ENCODE measurements at regions of chr3 and their contacts with region 1.

Region 1: GRCh38 chr3:138915503-138916498 is 31.1 kb downstream of the FOXL2 start:
- DNase-seq: peak; percentile 91 to 99 (median 96)
- ATAC-seq: peak; percentile 91 to 97 (median 92)
- H3K4me3 ChIP-seq: peak overlapping the region; percentile 39 to 68 (median 58)
- H3K27ac ChIP-seq: peak overlapping the region; percentile 93 to 99 (median 96)
- H3K4me1 ChIP-seq: peaks cover 5 to 13% (median 5%) of the 10 kb centered on the region in 3 donors
- H3K27me3 ChIP-seq: no peaks in the 10 kb centered on the region
- CTCF ChIP-seq: peak; percentile 92 to 98 (median 96)

Region 2: DNA sequence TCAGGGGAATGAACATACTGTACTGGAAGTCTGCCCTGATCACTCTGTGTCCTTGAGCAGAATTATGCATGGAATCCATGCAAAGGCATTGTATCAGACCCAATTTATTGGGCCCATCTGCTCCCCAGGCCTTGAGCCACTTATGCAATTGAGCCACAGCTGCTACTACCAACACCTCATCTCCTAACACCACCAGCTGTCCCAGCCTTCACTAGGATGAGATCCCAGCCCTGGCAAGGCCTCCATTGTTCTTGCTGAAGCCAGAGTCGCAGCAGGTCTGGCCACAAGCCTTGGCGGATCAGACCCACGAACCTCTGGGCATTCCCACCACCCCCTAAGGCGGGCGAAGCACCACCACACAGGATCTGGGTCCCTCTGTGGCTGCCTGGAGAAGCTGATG is 577.0 kb before region 1 on chr3:
- intact Hi-C with region 1: no loop called
- DNase-seq: no peak
- ATAC-seq: no peak
- H3K4me3 ChIP-seq: no peak overlapping the region
- H3K27ac ChIP-seq: no peak overlapping the region
- H3K4me1 ChIP-seq: peaks cover 5 to 9% (median 7%) of the 10 kb centered on the region in 3 donors
- H3K27me3 ChIP-seq: no peaks in the 10 kb centered on the region
- CTCF ChIP-seq: no peak

Region 3: DNA sequence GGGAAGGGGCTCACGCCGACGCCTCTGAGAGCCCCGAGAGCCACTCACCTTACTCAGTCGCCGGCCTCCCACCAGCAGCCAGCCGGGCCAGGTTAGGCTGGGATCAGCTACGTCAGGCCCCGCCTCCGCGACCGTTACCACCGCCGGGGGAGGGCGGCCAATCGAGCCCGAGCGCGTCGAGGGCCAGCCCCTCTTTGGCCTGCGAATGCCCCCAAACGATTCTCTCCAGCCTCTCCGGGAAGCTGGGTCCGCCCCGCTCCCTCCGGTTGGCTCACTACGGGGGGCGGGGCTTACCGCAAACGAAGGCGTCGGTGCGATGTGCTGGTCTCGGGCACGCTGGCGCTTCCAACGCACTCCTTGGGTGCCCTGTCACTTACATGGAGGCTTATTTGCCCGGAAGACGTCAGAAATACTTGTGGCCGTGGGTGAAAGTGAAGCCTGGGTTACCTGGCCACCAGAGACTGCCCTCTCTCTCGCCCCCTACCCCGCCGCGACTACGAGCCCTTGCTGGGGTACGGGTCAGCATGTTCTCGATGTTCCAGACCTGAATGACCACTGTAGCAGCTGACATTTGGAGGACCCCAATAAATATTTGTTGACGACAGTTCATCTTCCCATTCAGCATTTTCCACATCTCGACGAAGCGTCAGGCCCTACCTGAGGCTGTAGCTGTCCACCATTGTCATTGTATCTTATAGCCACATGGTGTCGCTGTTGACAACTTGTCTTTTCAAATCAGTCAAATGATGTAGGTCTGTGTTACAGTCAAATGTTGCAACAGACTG is 321.5 kb before region 1 on chr3 and contains the start of gene CEP70:
- intact Hi-C with region 1: loop called in 2 of 3 experiments (anchors 10 kb)
- DNase-seq: peak; percentile 95 to 97 (median 96)
- ATAC-seq: peak; percentile 92 to 97 (median 94)
- H3K4me3 ChIP-seq: peak within 1 kb of the TSS; percentile 31 to 73 (median 55)
- H3K27ac ChIP-seq: peak within 1 kb of the TSS; percentile 92 to 99 (median 93)
- H3K4me1 ChIP-seq: peaks cover 31 to 33% (median 33%) of the 10 kb centered on the region in 3 donors
- H3K27me3 ChIP-seq: no peaks in the 10 kb centered on the region
- CTCF ChIP-seq: peak; percentile 76 to 92 (median 88)
- total RNA-seq, gene CEP70: 22.0 to 44.0 (median 24.6) TPM

Region 4: GRCh38 chr3:138705675-138706074 is 210.1 kb before region 1 on chr3:
- intact Hi-C with region 1: loop called in 1 of 3 experiments (anchors 10 kb)
- DNase-seq: no peak
- ATAC-seq: no peak
- H3K4me3 ChIP-seq: no peak overlapping the region
- H3K27ac ChIP-seq: no peak overlapping the region
- H3K4me1 ChIP-seq: no peaks in the 10 kb centered on the region
- H3K27me3 ChIP-seq: no peaks in the 10 kb centered on the region
- CTCF ChIP-seq: no peak

Measured in pancreas (tissue), 10 donors.